H1 (cell line): ENCODE measurements at regions of chr19 and their contacts with region 1.

Region 1: DNA sequence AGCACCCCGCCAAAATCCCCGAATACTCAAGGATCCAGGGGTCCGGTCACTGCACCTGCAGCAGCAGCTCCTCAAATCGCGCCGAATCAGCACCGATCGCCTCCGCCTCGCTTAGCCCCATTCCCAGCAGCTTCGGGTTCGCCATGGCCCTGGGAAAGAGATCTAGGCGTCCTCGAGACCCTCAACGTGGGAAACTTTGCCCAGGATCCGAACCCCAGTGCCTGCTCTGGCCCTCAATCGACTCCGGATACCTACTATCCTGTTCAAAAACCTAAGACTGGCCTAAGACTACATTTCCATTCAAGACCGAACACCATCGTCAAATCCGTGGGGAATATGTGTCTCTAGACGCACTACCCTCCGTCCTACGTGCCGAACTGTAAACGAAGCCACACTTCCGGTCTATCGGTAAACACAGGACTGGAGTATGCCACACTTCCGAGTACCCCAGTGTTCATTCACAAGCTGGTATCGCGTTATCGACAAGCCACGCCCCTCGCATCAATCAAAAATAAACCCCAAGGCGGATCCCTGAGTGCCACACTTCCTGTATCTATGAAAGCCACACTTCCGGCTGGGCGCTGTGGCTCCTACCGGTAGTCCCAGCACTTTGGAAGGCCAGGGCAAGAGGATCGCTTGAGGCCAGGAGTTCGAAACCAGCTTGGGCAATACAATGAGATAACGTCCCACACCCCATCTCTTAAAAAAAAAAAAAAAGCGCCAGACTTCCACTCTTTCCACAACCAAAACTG is at the start of gene PIH1D1:
- DNase-seq: peak; percentile 93 to 95
- H3K4me3 ChIP-seq: peak within 1 kb of the TSS; percentile 86 to 99 (median 96)
- H3K27ac ChIP-seq: peak within 1 kb of the TSS; percentile 69
- H3K4me1 ChIP-seq: peaks cover 0 to 14% (median 10%) of the 10 kb centered on the region in 4 experiments; a peak in 6 of 7 replicates
- H3K27me3 ChIP-seq: no peaks in the 10 kb centered on the region
- CTCF ChIP-seq: no peak
- EP300 ChIP-seq: no peak
- POLR2A ChIP-seq: peak; percentile 51 to 86
- RAD21 ChIP-seq: no peak
- total RNA-seq, gene PIH1D1: 146 and 155 TPM in 2 replicates

Region 2: GRCh38 chr19:49340069-49340864 is 111.3 kb before region 1 on chr19:
- CTCF ChIA-PET with region 1: no interaction called
- POLR2A ChIA-PET with region 1: interaction called, 10 read pairs
- DNase-seq: peak in 1 of 2 experiments; percentile 75
- H3K4me3 ChIP-seq: peak overlapping the region in 2 of 4 experiments; percentile 32 to 56; a peak in 4 of 8 replicates
- H3K27ac ChIP-seq: no peak overlapping the region
- H3K4me1 ChIP-seq: peaks cover 0 to 17% (median 10%) of the 10 kb centered on the region in 4 experiments; a peak in 6 of 7 replicates
- H3K27me3 ChIP-seq: peaks cover 0 to 10% (median 3%) of the 10 kb centered on the region in 4 experiments; a peak in 4 of 7 replicates
- CTCF ChIP-seq: no peak
- EP300 ChIP-seq: no peak
- POLR2A ChIP-seq: no peak
- RAD21 ChIP-seq: no peak

Region 3: DNA sequence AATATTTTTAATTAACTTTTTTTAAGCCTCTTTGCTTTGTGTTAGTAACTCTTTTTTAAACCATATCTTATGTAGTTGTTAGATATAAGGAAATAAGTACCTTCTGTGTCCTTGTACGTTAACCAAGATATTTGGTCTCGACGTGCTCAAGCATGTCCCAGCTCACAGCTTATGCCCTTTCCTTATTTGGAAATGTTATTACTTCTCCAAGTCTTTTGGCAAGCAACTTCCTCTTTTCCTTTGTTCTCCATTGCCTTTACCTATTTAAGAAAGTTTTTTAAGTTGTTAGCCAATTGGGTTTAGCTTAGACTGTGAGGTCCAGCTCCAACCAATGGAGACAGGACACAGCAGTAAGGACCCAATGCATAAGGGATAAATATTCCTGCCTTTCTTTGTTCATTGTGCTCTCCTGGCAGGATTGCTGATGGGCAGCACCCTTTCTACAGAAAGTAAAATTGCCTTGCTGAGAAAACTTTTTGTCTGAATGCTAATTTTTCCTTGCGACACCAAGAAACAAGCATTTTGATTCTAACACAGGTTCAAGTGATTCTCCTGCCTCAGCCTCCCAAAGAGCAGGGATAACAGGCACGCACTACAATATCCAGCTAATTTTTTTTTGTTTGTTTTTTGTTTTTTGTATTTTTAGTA is 82.8 kb before region 1 on chr19:
- CTCF ChIA-PET with region 1: no interaction called
- POLR2A ChIA-PET with region 1: interaction called, 12 read pairs
- DNase-seq: no peak
- H3K4me3 ChIP-seq: no peak overlapping the region
- H3K27ac ChIP-seq: no peak overlapping the region
- H3K4me1 ChIP-seq: peaks cover 0 to 6% (median 2%) of the 10 kb centered on the region in 4 experiments; a peak in 5 of 7 replicates
- H3K27me3 ChIP-seq: no peaks in the 10 kb centered on the region
- CTCF ChIP-seq: no peak
- EP300 ChIP-seq: no peak
- POLR2A ChIP-seq: no peak
- RAD21 ChIP-seq: no peak

Region 4: GRCh38 chr19:49468746-49469447 is 17.3 kb after region 1 on chr19:
- CTCF ChIA-PET with region 1: interaction called, 9 read pairs
- POLR2A ChIA-PET with region 1: interaction called, 29 read pairs
- DNase-seq: peak in 1 of 2 experiments; percentile 79
- H3K4me3 ChIP-seq: no peak overlapping the region
- H3K27ac ChIP-seq: peak overlapping the region; percentile 36; the same call in 1 of the 2 replicates
- H3K4me1 ChIP-seq: peaks cover 0 to 8% (median 3%) of the 10 kb centered on the region in 4 experiments; a peak in 6 of 7 replicates
- H3K27me3 ChIP-seq: no peaks in the 10 kb centered on the region
- CTCF ChIP-seq: no peak
- EP300 ChIP-seq: no peak
- POLR2A ChIP-seq: no peak
- RAD21 ChIP-seq: no peak

Region 5: DNA sequence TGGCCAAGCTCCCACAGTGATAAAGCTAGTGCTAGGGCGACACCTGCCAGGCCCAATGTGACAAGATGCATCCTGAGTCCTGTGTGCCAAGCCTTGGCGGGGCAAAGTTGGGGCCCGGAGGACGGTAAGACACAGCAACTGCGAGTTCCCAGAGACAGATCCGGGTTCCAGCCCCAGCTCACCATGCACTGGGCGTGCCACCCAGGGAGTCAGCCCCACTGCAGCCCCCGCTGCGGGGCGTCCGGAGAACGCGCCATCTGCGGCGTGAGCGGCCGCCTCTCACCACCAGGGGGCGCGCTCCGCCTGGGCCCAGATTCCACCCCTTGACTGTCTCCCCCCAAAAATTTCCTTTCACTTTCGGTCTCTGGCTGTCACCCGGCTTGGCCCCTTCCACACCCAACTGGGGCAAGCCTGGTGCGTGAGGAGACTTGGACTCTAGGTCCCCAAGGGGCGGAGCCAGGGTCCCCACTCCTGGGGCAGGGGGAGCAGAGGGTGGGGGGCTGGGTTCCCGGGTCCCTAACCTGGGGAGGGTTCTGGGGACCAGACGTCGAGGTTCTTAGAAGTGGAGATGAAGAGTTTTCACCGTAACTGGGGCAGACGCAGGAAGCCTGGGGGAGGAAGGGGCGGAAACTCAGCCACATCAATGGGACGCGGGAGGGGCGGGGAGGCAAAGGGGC is 22.4 kb after region 1 on chr19 and contains the start of gene FLT3LG:
- CTCF ChIA-PET with region 1: interaction called, 9 read pairs
- POLR2A ChIA-PET with region 1: interaction called, 33 read pairs
- DNase-seq: peak in 1 of 2 experiments; percentile 90
- H3K4me3 ChIP-seq: peak within 1 kb of the TSS in 2 of 4 experiments; percentile 10 to 58; a peak in 3 of 8 replicates
- H3K27ac ChIP-seq: no peak within 1 kb of the TSS
- H3K4me1 ChIP-seq: peaks cover 0 to 5% (median under 1%) of the 10 kb centered on the region in 4 experiments; a peak in 3 of 7 replicates
- H3K27me3 ChIP-seq: peaks cover 0 to 5% (median 0%) of the 10 kb centered on the region in 4 experiments; a peak in 4 of 7 replicates
- CTCF ChIP-seq: peak; percentile 86 to 92 (median 88)
- EP300 ChIP-seq: no peak
- POLR2A ChIP-seq: no peak
- RAD21 ChIP-seq: peak; percentile 36 to 49; a peak in 3 of 4 replicates
- total RNA-seq, gene FLT3LG: 1.6 and 2.6 TPM in 2 replicates

Region 6: GRCh38 chr19:49528211-49528771 is 76.7 kb after region 1 on chr19:
- CTCF ChIA-PET with region 1: no interaction called
- POLR2A ChIA-PET with region 1: no interaction called
- DNase-seq: peak in 1 of 2 experiments; percentile 57
- H3K4me3 ChIP-seq: peak overlapping the region; percentile 36 to 65 (median 49)
- H3K27ac ChIP-seq: no peak overlapping the region
- H3K4me1 ChIP-seq: peaks cover 0 to 9% (median 3%) of the 10 kb centered on the region in 4 experiments; a peak in 5 of 7 replicates
- H3K27me3 ChIP-seq: no peaks in the 10 kb centered on the region
- CTCF ChIP-seq: no peak
- EP300 ChIP-seq: no peak
- POLR2A ChIP-seq: no peak; a peak in 1 of 3 replicates
- RAD21 ChIP-seq: no peak